Heart right ventricle (tissue), 16 donors: ENCODE measurements at regions of chr6 and their contacts with region 1.

Region 1: DNA sequence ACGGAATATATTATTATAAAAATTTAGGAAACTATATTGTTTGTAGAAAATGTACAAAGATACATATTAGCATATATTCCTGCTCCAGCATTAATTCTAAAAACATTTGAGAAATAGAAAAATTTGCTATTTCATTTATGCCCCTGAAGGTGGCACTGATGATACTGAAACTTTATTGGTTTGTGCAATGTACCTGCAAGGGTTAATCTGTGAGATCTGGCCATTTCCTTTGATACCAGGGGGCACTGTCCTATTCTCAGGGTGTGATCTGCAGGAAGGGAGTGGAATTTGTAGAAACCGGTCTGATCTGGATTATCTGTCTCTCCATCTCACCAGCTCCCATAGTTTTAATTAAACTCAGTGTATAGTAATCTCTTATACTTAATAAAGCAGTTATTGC is 625.1 kb upstream of the IMPG1 start:
- DNase-seq: no peak
- ATAC-seq: no peak
- H3K4me3 ChIP-seq: no peak overlapping the region
- H3K27ac ChIP-seq: no peak overlapping the region
- H3K4me1 ChIP-seq: no peaks in the 10 kb centered on the region
- H3K27me3 ChIP-seq: no peaks in the 10 kb centered on the region
- CTCF ChIP-seq: peak in 2 of 9 donors; percentile 4 to 15

Region 2: GRCh38 chr6:76397966-76398365 is 299.6 kb before region 1 on chr6:
- intact Hi-C with region 1: no loop called
- DNase-seq: no peak
- ATAC-seq: no peak
- H3K4me3 ChIP-seq: no peak overlapping the region
- H3K27ac ChIP-seq: no peak overlapping the region
- H3K4me1 ChIP-seq: no peaks in the 10 kb centered on the region
- H3K27me3 ChIP-seq: no peaks in the 10 kb centered on the region
- CTCF ChIP-seq: no peak

Region 3: DNA sequence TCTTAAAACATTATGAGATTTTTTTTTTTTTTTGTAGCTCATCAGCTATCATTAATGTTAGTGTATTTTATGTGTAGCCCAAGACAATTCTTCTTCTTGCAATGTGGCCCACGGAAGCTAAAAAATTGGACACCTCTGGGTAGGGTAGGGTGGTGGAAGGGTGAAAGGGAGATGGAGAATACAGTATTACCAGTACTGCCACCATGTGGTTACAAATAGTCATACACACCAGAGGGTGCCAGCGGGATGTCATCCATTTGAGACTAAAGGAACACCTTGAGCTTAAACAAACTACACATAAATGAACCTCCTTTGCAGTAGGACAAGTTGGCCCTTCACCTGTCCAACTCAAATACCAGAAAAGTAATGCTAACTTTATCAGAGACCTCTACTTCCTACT is 163.8 kb after region 1 on chr6:
- intact Hi-C with region 1: loop called in 2 of 10 experiments (anchors 10 kb)
- DNase-seq: no peak
- ATAC-seq: no peak
- H3K4me3 ChIP-seq: no peak overlapping the region
- H3K27ac ChIP-seq: no peak overlapping the region
- H3K4me1 ChIP-seq: peaks cover 0 to 8% (median 0%) of the 10 kb centered on the region in 9 donors
- H3K27me3 ChIP-seq: no peaks in the 10 kb centered on the region
- CTCF ChIP-seq: peak in 7 of 9 donors; percentile 8 to 44 (median 21)